Right ventricle myocardium inferior (tissue), 1 donor: ENCODE measurements at regions of chr6 and their contacts with region 1.

Region 1: GRCh38 chr6:13487122-13488014 is at the start of gene GFOD1:
- DNase-seq: peak; percentile 96
- ATAC-seq: peak; percentile 92
- total RNA-seq, gene GFOD1: 38.8 TPM

Region 2: GRCh38 chr6:13336553-13336952 is 150.8 kb before region 1 on chr6:
- intact Hi-C with region 1: loop called (anchors 2 kb)
- DNase-seq: peak; percentile 85
- ATAC-seq: peak; percentile 76

Region 3: GRCh38 chr6:13427801-13428582 is 59.4 kb before region 1 on chr6:
- intact Hi-C with region 1: loop called (anchors 2 kb)
- DNase-seq: peak; percentile 78
- ATAC-seq: no peak

Region 4: DNA sequence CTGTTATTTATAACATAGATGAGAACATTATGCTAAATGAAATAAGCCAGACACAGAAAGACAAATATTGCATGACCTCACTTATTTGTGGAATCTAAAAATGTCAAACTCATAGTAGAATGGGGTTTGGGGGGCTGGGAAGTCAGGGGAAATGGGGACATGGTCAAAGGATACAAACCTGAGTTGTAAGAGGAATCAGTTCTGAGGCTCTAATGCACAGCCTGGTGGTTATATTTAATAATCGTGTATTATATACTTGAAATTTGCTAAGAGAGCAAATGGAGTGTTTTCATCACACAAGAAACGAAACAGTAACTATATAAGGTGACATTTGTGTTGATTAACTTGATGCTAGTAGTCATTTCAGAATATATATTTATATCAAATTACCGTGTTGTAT is 40.9 kb after region 1 on chr6:
- intact Hi-C with region 1: loop called (anchors 2 kb)
- DNase-seq: no peak
- ATAC-seq: peak; percentile 24

Region 5: GRCh38 chr6:13574149-13574570 is 86.8 kb after region 1 on chr6:
- intact Hi-C with region 1: loop called (anchors 2 kb)
- DNase-seq: peak; percentile 96
- ATAC-seq: peak; percentile 96